ENCODE measurements at regions of chr11 and their contacts with region 1.

Region 1: DNA sequence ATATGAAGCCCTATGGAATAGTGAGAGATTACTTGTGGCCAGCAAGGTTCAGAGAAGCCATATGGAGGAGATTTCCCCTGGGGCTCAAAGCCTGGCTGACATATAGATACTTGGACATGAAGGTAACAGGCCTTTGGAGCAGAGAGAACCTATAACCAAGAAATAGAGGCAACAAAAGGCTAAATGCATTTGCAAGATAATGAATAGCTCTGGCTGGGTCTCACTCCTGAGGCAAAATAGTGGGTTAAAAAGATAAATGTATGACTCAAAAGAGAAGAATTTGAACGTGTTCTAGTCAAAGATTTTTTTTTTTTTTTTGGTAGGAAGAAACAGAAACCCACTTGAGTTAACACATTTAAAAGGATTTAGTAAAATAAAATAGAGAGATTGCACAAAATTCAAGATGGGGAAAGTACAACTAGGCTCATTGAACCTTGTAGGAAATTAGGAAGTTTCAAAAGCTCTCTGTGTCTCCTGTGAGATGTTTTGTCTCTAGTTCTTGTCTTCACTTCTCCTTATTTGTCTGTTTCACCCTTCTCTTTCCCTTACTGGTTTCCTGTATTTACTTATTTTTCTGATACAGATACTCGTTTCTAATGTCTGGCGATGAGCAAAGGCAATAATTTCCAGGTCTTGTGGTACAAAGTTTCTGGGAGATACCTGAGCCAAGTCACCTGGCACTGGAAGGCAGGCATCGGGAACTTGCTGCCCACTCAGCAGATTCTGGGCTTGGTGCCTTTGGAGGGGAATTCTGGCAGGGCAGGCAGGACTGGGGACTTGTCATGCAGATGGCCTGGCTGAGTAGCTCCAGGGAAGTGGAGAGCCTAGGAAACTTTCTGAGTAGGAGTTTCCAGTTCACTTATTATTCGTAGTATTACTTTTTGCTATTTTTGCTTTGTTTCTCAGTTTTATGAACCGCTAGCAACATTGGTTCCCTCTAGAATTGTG is 49.2 kb upstream of the SESN3 start:
- DNase-seq: peak; percentile 61
- ATAC-seq: peak; percentile 70
- H3K4me3 ChIP-seq: peak overlapping the region in 2 of 5 experiments; percentile 16 to 48
- H3K4me3 Mint-ChIP-seq: peak overlapping the region; percentile 83
- H3K27ac ChIP-seq: peak overlapping the region; percentile 77 to 84
- H3K27ac Mint-ChIP-seq: peak overlapping the region; percentile 94
- H3K4me1 ChIP-seq: peaks cover 23 to 35% of the 10 kb centered on the region in 2 donors
- H3K4me1 Mint-ChIP-seq: peaks cover 40% of the 10 kb centered on the region
- H3K27me3 ChIP-seq: no peaks in the 10 kb centered on the region
- H3K27me3 Mint-ChIP-seq: no peaks in the 10 kb centered on the region
- CTCF ChIP-seq: no peak

Region 2: GRCh38 chr11:95182397-95182796 is 97.8 kb before region 1 on chr11:
- CTCF ChIA-PET with region 1: no interaction called
- POLR2A ChIA-PET with region 1: no interaction called
- intact Hi-C with region 1: no loop called
- DNase-seq: no peak
- ATAC-seq: no peak
- H3K4me3 ChIP-seq: no peak overlapping the region
- H3K4me3 Mint-ChIP-seq: no peak overlapping the region
- H3K27ac ChIP-seq: peak overlapping the region in 1 of 2 donors; percentile 34
- H3K27ac Mint-ChIP-seq: peak overlapping the region; percentile 57
- H3K4me1 ChIP-seq: no peaks in the 10 kb centered on the region
- H3K4me1 Mint-ChIP-seq: peaks cover 16% of the 10 kb centered on the region
- H3K27me3 ChIP-seq: no peaks in the 10 kb centered on the region
- H3K27me3 Mint-ChIP-seq: no peaks in the 10 kb centered on the region
- CTCF ChIP-seq: no peak

Region 3: GRCh38 chr11:95248666-95249467 is 31.3 kb before region 1 on chr11:
- CTCF ChIA-PET with region 1: interaction called, 3 read pairs
- POLR2A ChIA-PET with region 1: interaction called, 4 read pairs
- intact Hi-C with region 1: loop called (anchors 5 kb)
- DNase-seq: peak; percentile 55
- ATAC-seq: peak; percentile 77
- H3K4me3 ChIP-seq: no peak overlapping the region
- H3K4me3 Mint-ChIP-seq: peak overlapping the region; percentile 58
- H3K27ac ChIP-seq: no peak overlapping the region
- H3K27ac Mint-ChIP-seq: peak overlapping the region; percentile 66
- H3K4me1 ChIP-seq: peaks cover 34 to 47% of the 10 kb centered on the region in 2 donors
- H3K4me1 Mint-ChIP-seq: peaks cover 53% of the 10 kb centered on the region
- H3K27me3 ChIP-seq: no peaks in the 10 kb centered on the region
- H3K27me3 Mint-ChIP-seq: no peaks in the 10 kb centered on the region
- CTCF ChIP-seq: no peak

Region 4: DNA sequence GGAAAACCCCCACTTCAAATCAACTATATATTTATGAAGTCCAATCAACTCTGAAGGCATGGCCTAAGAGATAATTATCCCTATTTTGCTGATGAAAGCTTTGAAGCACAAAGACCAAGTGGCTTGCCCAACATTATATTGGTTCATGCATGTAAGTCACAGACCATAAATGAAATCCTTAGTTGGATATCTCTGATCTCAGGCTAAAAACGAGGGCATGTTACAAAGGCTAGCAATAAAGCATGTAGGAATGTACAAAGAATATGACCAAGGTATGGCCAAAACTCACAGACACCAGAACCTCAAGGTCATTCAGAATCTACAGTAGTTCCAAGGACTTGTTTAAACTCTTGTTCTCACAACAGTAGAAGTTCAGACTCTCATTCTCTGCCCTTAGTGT is 51.0 kb after region 1 on chr11:
- CTCF ChIA-PET with region 1: no interaction called
- POLR2A ChIA-PET with region 1: no interaction called
- intact Hi-C with region 1: no loop called
- DNase-seq: no peak
- ATAC-seq: no peak
- H3K4me3 ChIP-seq: no peak overlapping the region
- H3K4me3 Mint-ChIP-seq: no peak overlapping the region
- H3K27ac ChIP-seq: no peak overlapping the region
- H3K27ac Mint-ChIP-seq: no peak overlapping the region
- H3K4me1 ChIP-seq: peaks cover 13 to 19% of the 10 kb centered on the region in 2 donors
- H3K4me1 Mint-ChIP-seq: peaks cover 11% of the 10 kb centered on the region
- H3K27me3 ChIP-seq: no peaks in the 10 kb centered on the region
- H3K27me3 Mint-ChIP-seq: no peaks in the 10 kb centered on the region
- CTCF ChIP-seq: no peak

Measured in B cell (primary cell).